Activated CD4-positive, alpha-beta T cell treated with anti-CD3 and anti-CD28 coated beads for 36 hours (primary cell): ENCODE measurements at regions of chr1 and their contacts with region 1.

Region 1: DNA sequence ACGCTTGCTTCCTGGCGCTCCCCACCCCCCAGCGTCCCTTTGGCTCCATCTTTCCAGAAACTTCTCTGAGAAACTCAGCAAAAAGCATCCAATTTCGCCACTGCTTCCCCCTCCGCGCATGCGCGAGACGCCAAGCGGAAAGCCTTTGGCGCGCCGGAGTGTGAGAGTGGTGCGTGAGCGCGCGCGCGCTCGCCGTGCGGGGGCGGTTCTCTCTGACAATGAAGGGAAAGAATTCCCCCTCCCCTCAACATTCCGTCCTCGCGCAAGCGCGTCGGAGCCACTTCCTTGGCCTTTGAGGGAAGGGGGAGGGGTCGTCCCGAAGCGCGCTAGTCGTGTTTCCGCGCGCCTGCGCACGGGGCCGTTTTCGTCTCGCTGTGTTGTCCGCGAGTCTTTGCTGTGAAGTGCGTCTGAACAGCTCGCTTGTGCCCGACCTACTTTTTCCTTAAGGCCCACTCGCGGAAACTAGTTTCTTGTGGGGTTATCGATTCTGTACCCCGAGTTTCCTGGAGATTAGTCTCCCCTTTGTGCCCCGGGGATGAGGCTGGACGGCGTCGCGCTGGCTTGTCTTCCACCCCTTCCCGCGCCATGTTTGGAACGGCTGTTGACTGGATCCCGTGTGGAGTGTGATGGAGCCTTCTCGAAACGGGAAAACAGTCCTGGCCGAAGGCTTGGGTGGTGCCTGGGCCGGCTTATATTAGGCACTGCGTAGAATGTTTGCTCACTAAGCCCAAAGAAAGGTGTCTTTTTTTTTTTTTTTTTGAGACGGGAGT is 11.6 kb upstream of the SPEN start:
- DNase-seq: peak; percentile 100
- ATAC-seq: peak; percentile 59
- H3K4me3 Mint-ChIP-seq: peak overlapping the region; percentile 90
- H3K27ac Mint-ChIP-seq: peak overlapping the region; percentile 98
- H3K4me1 Mint-ChIP-seq: peaks cover 22% of the 10 kb centered on the region
- H3K27me3 Mint-ChIP-seq: no peaks in the 10 kb centered on the region

Region 2: DNA sequence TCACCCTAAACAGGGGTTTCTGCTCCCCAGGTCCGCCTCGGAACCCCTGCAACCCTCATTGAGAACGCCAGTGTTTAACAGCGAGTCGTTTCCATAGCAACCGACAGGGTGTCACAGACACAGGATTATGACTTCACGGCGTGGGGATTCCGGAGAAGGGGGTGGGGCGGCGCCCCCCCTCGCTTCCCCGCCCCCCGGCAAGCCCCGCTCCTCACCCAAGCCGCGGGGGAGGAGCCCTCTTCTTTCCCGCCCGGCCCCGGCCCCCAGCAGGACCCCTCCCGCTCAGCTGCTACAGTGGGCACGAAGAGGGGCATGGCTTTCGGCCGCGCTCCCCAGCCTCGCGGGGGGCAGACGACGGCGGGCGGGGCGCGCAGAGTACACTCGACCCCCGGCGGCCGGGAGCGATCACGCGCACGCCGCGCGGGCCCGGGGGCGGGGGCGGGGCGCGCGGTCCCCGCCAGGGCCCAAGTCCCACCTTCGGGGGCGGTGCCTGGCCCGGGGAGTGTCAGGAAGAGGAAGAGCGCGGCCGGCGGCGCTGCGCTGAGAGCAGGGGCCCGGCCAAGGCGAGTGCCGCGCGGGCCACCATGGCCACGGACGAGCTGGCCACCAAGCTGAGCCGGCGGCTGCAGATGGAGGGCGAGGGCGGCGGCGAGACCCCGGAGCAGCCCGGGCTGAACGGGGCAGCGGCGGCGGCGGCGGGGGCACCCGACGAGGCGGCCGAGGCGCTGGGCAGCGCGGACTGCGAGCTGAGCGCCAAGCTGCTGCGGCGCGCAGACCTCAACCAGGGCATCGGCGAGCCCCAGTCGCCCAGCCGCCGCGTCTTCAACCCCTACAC is 426.3 kb before region 1 on chr1 and contains the start of gene EFHD2:
- CTCF ChIA-PET with region 1: no interaction called
- POLR2A ChIA-PET with region 1: no interaction called
- intact Hi-C with region 1: loop called in 1 of 2 experiments (anchors 2 kb)
- DNase-seq: peak; percentile 90
- ATAC-seq: peak; percentile 86
- H3K4me3 Mint-ChIP-seq: peak within 1 kb of the TSS; percentile 87
- H3K27ac Mint-ChIP-seq: peak within 1 kb of the TSS; percentile 81
- H3K4me1 Mint-ChIP-seq: peaks cover 28% of the 10 kb centered on the region
- H3K27me3 Mint-ChIP-seq: peaks cover 5% of the 10 kb centered on the region
- total RNA-seq, gene EFHD2: 43.1 to 48.6 TPM

Region 3: DNA sequence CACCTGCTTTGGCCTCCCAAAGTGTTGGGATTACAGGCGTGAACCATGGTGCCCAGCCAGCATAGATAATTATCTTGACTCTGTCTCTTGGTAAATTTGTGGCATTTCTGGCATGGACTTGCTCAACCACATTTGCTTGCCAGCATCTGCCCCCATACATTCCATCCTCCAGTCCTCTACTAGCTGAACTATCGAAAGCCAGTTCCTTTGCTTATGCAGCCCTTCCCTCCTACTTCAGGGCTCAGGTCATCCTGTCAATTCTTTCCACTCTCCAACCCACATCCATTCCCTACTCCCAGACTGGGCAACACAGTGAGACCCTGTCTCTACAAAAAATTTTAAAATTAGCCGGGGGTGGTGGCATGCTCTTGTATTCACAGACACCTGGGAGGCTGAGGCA is 15.4 kb before region 1 on chr1:
- CTCF ChIA-PET with region 1: interaction called, 14 read pairs
- POLR2A ChIA-PET with region 1: interaction called, 4 read pairs
- intact Hi-C with region 1: no loop called
- DNase-seq: no peak
- ATAC-seq: no peak
- H3K4me3 Mint-ChIP-seq: no peak overlapping the region
- H3K27ac Mint-ChIP-seq: no peak overlapping the region
- H3K4me1 Mint-ChIP-seq: peaks cover 6% of the 10 kb centered on the region
- H3K27me3 Mint-ChIP-seq: no peaks in the 10 kb centered on the region

Region 4: DNA sequence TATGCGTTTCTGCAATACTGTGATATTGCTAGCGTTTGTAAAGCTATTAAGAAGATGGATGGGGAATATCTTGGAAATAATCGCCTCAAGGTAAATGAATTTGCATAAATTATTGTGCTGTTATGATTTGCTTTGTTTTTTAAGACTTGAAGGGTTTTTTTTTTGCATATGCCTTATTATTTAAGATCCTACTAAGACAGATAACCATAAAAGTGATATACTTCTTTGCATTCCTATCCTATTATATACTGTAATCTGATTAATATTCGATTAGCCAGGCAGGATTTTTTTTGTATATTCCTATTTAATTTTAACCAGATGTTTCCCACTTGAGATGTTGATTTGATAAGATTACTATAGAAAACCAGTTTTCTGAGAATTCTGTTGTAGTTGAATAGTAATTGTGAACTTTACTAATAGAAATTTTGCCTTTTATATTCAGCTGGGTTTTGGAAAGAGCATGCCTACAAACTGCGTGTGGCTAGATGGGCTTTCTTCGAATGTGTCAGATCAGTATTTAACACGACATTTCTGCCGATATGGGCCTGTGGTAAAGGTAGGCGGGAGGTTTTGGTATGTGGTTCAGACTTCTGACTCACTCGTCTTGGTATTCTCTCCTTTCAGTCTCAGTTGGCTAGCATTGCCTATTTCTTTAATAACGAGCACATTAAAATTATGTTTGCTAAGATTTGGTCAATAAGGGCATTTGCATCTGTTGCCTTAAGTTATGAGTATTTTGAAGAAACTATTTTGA is 83.2 kb after region 1 on chr1:
- CTCF ChIA-PET with region 1: interaction called, 3 read pairs
- POLR2A ChIA-PET with region 1: interaction called, 3 read pairs
- intact Hi-C with region 1: loop called (anchors 1 to 2 kb)
- DNase-seq: peak; percentile 87
- ATAC-seq: peak; percentile 96
- H3K4me3 Mint-ChIP-seq: peak overlapping the region; percentile 17
- H3K27ac Mint-ChIP-seq: no peak overlapping the region
- H3K4me1 Mint-ChIP-seq: peaks cover 35% of the 10 kb centered on the region
- H3K27me3 Mint-ChIP-seq: no peaks in the 10 kb centered on the region

Region 5: DNA sequence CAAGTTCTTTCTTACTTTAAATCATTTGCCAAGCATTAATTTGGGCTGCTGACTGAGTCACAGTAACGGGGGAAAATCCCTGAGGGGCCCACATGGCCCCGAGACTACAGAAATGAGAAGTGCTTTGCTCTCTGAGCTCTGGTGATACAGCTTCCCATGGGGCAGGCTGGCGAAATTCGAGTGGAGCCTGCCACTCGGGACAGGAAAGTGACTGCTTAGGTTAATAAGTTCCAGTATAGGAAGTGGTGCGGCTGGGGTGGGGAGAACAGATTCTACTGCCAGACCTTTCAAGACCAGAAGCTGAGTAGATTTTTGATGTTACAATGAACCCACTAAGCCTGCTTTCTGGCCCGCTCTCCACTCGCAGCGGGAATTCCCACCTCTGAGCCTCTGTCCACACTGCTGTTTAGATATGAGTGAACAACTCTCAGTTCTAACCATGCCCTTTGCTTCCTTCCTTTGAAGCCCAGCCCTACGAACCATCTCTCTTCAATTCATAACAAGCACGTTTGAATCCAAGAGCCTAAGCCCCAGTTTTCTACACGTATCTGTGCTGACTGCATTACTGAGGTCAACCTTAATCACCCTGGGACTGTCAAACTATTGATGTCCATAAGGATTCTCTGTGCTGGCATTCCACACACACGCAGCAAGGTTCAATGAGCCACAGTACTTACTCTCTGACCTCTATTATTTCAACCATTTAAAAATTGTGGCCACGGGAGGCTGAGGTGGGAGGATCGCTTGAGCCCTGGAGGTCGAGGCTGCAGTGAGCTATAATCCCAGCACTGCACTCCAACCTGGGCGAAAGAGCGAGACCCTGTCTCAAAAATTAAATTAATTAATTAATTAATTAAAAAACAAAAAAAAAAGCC is 130.4 kb after region 1 on chr1:
- CTCF ChIA-PET with region 1: no interaction called
- POLR2A ChIA-PET with region 1: interaction called, 9 read pairs
- intact Hi-C with region 1: loop called (anchors 1 kb)
- DNase-seq: peak; percentile 93
- ATAC-seq: peak; percentile 79
- H3K4me3 Mint-ChIP-seq: peak overlapping the region; percentile 54
- H3K27ac Mint-ChIP-seq: peak overlapping the region; percentile 98
- H3K4me1 Mint-ChIP-seq: peaks cover 83% of the 10 kb centered on the region
- H3K27me3 Mint-ChIP-seq: no peaks in the 10 kb centered on the region

Region 6: GRCh38 chr1:16206547-16207317 is 370.8 kb after region 1 on chr1:
- CTCF ChIA-PET with region 1: no interaction called
- POLR2A ChIA-PET with region 1: no interaction called
- intact Hi-C with region 1: loop called in 1 of 2 experiments (anchors 1 kb)
- DNase-seq: peak; percentile 97
- ATAC-seq: peak; percentile 94
- H3K4me3 Mint-ChIP-seq: peak overlapping the region; percentile 72
- H3K27ac Mint-ChIP-seq: peak overlapping the region; percentile 90
- H3K4me1 Mint-ChIP-seq: peaks cover 9% of the 10 kb centered on the region
- H3K27me3 Mint-ChIP-seq: no peaks in the 10 kb centered on the region

Region 7: DNA sequence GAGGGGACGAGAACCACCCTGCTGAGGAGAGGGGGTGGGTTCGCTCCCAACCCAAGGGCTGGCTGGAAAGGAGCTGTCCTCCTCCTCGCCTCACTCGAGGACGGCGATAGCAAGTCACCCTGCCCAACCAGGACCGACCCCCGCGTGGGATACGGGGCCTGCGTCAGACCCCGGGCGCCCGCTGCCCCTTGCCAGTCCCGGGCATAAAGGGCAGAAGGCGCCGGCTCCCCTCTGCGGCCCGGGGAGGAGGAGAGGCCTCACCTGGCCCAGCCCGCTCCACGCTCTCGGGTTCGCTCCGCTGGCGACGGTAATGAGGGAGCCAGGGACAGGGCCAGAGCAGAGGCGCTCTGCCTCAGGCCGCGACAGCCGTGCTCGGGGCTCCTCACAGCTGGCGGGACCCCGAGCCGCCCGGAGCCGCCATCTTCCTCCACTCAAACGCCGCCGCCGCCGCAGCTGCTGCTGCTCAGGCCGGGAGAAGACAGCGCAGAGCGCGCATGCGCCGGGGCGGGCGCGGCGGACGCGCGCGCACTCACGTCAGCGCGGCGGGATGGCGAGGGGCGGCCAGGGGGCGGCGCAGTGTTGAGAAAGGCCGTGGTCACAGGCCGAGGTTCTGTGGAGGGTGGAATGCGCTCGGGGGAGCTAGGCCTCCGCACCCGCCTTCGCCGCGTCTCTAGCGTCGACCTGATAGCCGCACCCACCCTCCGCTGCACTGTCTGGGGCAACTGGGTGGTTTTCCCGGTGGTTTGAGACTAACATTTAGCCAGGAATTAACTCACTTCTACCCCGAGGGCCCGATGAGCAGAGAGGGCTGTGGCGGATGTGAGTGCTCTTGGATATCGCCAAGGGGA is 516.3 kb after region 1 on chr1 and contains the start of gene FBXO42:
- CTCF ChIA-PET with region 1: no interaction called
- POLR2A ChIA-PET with region 1: no interaction called
- intact Hi-C with region 1: loop called in 1 of 2 experiments (anchors 1 kb)
- DNase-seq: peak; percentile 95
- ATAC-seq: peak; percentile 92
- H3K4me3 Mint-ChIP-seq: peak within 1 kb of the TSS; percentile 96
- H3K27ac Mint-ChIP-seq: peak within 1 kb of the TSS; percentile 96
- H3K4me1 Mint-ChIP-seq: peaks cover 31% of the 10 kb centered on the region
- H3K27me3 Mint-ChIP-seq: no peaks in the 10 kb centered on the region
- total RNA-seq, gene FBXO42: 14.3 to 18.1 TPM